Activated naive CD4-positive, alpha-beta T cell treated with anti-CD3 and anti-CD28 coated beads for 36 hours (primary cell): ENCODE measurements at regions of chr2 and their contacts with region 1.

Region 1: DNA sequence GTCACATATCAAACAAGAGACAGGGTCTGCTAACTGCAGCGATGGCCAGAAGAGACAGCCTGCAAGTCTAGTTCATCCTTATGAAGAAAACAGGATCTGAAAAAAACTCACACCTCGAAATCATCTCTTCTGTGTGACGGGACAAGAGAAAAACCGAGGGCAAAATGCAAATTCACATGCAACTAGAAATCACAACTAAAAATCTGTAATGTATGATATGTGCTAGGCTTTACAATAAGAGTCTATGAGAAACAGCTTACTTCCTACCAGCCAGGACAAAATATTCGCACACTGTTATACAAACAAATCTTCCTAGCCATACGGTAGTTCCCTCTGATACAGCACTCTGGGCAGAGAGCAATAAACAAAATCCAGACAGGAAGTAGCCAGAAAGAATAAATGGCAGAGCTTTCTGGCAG is 48.8 kb downstream of the ANKRD44 start:
- DNase-seq: no peak
- H3K4me3 Mint-ChIP-seq: peak overlapping the region; percentile 62
- H3K27ac Mint-ChIP-seq: peak overlapping the region; percentile 90
- H3K4me1 Mint-ChIP-seq: peaks cover 86% of the 10 kb centered on the region
- H3K27me3 Mint-ChIP-seq: no peaks in the 10 kb centered on the region

Region 2: DNA sequence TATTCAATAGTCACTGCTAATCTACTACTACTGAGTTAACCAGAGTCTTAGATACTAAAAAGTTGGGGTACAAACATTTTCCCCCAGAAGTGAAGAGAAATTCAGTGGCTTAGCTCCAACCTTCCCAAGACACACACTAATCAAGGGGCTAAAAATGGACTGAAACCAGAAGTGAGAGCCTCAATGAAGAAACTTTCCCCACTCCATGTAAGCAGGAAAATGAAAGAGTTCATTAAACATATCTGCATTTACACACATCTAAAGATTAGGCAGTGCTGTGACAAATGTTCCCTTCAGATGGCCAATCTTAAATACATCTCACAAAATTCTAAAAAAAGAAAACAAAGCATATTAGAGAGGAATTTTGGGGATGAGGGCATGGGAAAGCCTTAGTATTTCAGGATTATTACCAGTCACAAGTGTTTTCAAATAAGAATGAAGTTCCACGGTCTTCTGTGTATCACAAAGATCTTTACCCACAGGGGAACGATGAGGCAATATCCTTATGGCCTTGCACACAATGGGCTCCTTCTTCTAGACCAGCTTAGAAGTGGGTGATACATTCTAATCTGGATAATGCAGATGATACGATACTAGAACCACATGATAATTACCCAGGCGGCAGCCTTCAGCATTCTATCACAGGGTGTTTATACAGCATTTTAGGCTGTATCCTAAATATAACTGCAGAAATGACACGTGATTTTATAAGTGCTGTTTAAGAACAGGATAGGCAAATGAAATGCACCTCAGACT is 31.6 kb after region 1 on chr2:
- CTCF ChIA-PET with region 1: interaction called, 5 read pairs
- intact Hi-C with region 1: loop called (anchors 1 kb)
- DNase-seq: peak; percentile 48
- H3K4me3 Mint-ChIP-seq: peak overlapping the region; percentile 57
- H3K27ac Mint-ChIP-seq: peak overlapping the region; percentile 92
- H3K4me1 Mint-ChIP-seq: peaks cover 87% of the 10 kb centered on the region
- H3K27me3 Mint-ChIP-seq: no peaks in the 10 kb centered on the region